Vagina (tissue), 2 donors: ENCODE measurements at regions of chr4 and their contacts with region 1.

Region 1: DNA sequence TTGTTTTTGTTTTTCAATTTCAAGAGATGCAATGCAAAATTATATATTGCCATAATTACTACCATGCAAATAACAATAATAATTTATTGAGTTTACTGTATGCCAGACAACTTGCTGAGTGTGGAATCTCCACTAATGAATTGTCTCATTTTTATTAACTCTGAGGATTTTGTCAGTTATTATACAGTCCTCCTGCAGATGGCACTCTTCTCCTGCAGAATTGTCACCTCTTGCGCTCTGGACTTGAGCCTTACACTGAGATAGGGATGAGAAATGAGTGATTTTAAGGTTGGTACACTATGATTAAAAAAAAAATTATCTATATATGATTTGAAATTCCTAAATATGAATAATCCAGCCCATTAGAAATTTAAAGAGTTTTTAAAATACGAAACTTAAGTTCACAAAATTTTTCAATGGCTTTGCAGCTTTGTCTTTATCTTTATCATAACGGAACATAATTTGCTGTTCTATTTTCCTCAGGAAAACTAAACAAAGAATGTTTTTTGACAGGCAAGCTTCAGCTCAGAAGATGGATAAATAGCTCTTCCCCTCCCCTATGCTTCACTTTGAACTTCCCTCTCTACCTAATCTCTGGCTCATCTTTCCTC is 12.7 kb upstream of the PAQR3 start:
- DNase-seq: no peak
- H3K4me3 ChIP-seq: no peak overlapping the region
- H3K27ac ChIP-seq: no peak overlapping the region
- H3K4me1 ChIP-seq: no peaks in the 10 kb centered on the region
- H3K27me3 ChIP-seq: no peaks in the 10 kb centered on the region
- CTCF ChIP-seq: peak; percentile 51 to 74 (median 65)
- POLR2A ChIP-seq: no peak

Region 2: DNA sequence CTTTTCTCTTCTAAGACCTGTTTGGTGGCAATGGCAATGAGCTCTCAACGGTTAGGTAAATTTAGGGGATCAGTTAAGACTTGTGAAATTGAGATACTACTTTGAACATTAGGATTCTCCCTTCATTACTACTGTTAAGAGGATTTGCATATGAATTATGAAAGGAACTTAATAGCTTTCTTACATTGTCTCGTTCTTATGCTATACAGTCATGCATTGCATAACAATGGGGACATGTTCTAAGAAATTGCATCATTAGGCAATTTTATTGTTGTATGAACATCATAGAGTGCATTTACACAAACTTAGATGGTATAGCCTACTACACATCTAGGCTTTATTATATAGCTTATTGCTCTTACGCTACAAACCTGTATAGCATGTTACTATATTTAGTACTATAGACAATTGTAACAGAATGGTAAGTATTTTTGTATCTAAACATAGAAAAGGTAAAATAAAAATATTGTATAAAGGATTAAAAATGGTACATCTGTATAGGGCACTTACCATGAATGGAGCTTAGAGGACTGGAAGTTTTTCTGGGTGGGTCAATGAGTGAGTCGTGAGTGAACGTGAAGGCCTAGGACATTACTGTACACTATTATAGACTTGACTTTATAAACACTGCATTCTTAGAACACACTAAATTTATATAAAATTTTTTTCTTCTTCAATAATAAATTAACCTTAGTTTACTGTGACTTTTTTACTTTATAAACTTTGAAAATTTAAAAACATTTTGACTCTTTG is 75.2 kb before region 1 on chr4:
- intact Hi-C with region 1: no loop called
- DNase-seq: no peak
- H3K4me3 ChIP-seq: no peak overlapping the region
- H3K27ac ChIP-seq: no peak overlapping the region
- H3K4me1 ChIP-seq: no peaks in the 10 kb centered on the region
- H3K27me3 ChIP-seq: no peaks in the 10 kb centered on the region
- CTCF ChIP-seq: no peak
- POLR2A ChIP-seq: no peak

Region 3: DNA sequence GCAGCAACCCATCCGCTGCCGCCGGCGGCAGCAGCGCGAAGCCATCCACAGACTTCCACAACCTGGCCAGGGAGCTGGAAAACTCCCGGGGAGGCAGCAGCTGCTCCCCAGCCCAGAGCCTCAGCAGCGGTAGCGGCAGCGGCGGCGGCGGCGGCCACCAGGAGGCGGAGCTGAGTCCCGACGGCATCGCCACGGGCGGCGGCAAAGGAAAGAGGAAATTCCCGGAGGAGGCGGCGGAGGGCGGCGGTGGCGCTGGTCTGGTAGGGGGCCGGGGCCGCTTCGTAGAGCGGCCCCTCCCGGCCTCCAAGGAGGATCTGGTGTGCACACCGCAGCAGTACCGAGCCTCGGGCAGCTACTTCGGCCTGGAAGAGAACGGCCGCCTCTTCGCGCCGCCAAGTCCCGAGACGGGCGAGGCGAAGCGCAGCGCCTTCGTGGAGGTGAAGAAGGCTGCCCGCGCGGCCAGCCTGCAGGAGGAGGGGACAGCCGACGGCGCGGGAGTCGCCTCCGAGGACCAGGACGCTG is 1250.3 kb after region 1 on chr4:
- intact Hi-C with region 1: loop called (anchors 10 kb)
- DNase-seq: no peak
- H3K4me3 ChIP-seq: peak overlapping the region; percentile 63 to 87
- H3K27ac ChIP-seq: peak overlapping the region; percentile 91
- H3K4me1 ChIP-seq: peaks cover 21% of the 10 kb centered on the region
- H3K27me3 ChIP-seq: no peaks in the 10 kb centered on the region
- CTCF ChIP-seq: peak; percentile 29 to 84 (median 81)
- POLR2A ChIP-seq: no peak